CD4-positive, alpha-beta memory T cell (primary cell): ENCODE measurements at regions of chr12 and their contacts with region 1.

Region 1: DNA sequence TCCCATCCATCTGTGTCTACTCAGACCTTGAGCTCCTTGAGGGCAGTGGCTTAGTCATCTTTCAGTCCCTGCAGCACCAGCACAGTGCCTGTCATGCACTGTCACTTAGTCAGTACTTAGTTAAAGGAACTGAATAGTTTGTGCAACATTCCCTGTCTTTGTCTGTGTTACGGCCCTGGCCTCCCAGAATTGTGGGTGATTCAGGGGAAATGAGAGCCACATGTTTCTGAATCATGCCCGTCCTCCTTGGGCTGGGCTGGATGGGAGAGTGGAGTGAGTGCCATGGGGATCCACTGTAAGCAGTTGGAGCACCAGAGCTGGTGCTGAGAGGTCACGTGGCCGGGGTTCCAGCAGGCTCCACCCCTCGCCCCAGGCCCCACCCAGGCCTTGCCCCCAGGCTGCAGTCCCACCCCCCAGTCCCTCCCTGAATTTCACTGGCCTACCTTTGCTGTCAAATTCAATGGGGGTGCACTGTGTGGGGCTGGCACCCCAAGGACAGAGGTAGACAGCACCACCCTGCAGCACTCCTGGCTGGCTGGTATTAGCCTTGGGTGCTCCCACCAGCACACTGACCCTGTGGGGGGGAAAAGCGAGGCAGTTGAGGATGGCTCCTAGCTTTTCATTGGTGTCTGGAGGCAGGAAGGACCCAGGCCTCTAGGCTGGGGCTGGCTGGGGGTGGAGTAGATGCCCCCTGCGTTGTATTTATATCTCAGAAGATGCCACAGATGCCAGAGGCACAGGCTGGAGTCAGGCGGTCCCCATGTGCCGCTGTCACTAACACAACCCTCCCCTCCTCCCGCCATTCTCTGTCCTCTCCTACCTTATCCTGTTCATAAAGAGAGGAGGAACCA is 7.5 kb downstream of the ITGA5 start:
- DNase-seq: peak in 3 of 5 donors; percentile 38 to 66 (median 43)
- H3K4me3 ChIP-seq: peak overlapping the region; percentile 8 to 94
- H3K4me3 Mint-ChIP-seq: peak overlapping the region; percentile 72 to 90 (median 82)
- H3K27ac ChIP-seq: peak overlapping the region; percentile 92
- H3K27ac Mint-ChIP-seq: peak overlapping the region; percentile 90 to 100 (median 97)
- H3K4me1 ChIP-seq: peaks cover 73% of the 10 kb centered on the region
- H3K4me1 Mint-ChIP-seq: peaks cover 40 to 84% (median 71%) of the 10 kb centered on the region in 4 donors
- H3K27me3 ChIP-seq: no peaks in the 10 kb centered on the region
- H3K27me3 Mint-ChIP-seq: no peaks in the 10 kb centered on the region

Region 2: GRCh38 chr12:54259194-54260011 is 152.2 kb before region 1 on chr12:
- CTCF ChIA-PET with region 1: no interaction called
- POLR2A ChIA-PET with region 1: no interaction called
- intact Hi-C with region 1: no loop called
- DNase-seq: peak in 4 of 5 donors; percentile 17 to 53 (median 40)
- H3K4me3 ChIP-seq: no peak overlapping the region
- H3K4me3 Mint-ChIP-seq: peak overlapping the region in 1 of 8 donors; percentile 51
- H3K27ac ChIP-seq: no peak overlapping the region
- H3K27ac Mint-ChIP-seq: peak overlapping the region in 4 of 7 donors; percentile 28 to 57 (median 46)
- H3K4me1 ChIP-seq: peaks cover 22% of the 10 kb centered on the region
- H3K4me1 Mint-ChIP-seq: peaks cover 11 to 26% (median 16%) of the 10 kb centered on the region in 4 donors
- H3K27me3 ChIP-seq: no peaks in the 10 kb centered on the region
- H3K27me3 Mint-ChIP-seq: no peaks in the 10 kb centered on the region

Region 3: GRCh38 chr12:54390668-54391551 is 20.7 kb before region 1 on chr12:
- CTCF ChIA-PET with region 1: interaction called, 379 read pairs
- POLR2A ChIA-PET with region 1: interaction called, 20 read pairs
- intact Hi-C with region 1: no loop called
- DNase-seq: peak; percentile 64 to 77 (median 67)
- H3K4me3 ChIP-seq: peak overlapping the region; percentile 15 to 28
- H3K4me3 Mint-ChIP-seq: peak overlapping the region; percentile 64 to 89 (median 80)
- H3K27ac ChIP-seq: no peak overlapping the region
- H3K27ac Mint-ChIP-seq: peak overlapping the region in 1 of 7 donors; percentile 25
- H3K4me1 ChIP-seq: peaks cover 39% of the 10 kb centered on the region
- H3K4me1 Mint-ChIP-seq: peaks cover 24 to 51% (median 29%) of the 10 kb centered on the region in 4 donors
- H3K27me3 ChIP-seq: no peaks in the 10 kb centered on the region
- H3K27me3 Mint-ChIP-seq: no peaks in the 10 kb centered on the region

Region 4: GRCh38 chr12:54398995-54399793 is 12.4 kb before region 1 on chr12:
- CTCF ChIA-PET with region 1: interaction called, 379 read pairs
- POLR2A ChIA-PET with region 1: interaction called, 213 read pairs
- intact Hi-C with region 1: loop called (anchors 1 kb)
- DNase-seq: peak; percentile 82 to 88 (median 85)
- H3K4me3 ChIP-seq: no peak overlapping the region
- H3K4me3 Mint-ChIP-seq: no peak overlapping the region
- H3K27ac ChIP-seq: no peak overlapping the region
- H3K27ac Mint-ChIP-seq: peak overlapping the region in 5 of 7 donors; percentile 65 to 79 (median 76)
- H3K4me1 ChIP-seq: peaks cover 9% of the 10 kb centered on the region
- H3K4me1 Mint-ChIP-seq: peaks cover 7 to 31% (median 14%) of the 10 kb centered on the region in 4 donors
- H3K27me3 ChIP-seq: no peaks in the 10 kb centered on the region
- H3K27me3 Mint-ChIP-seq: no peaks in the 10 kb centered on the region

Region 5: GRCh38 chr12:54425702-54426101 is 14.1 kb after region 1 on chr12:
- CTCF ChIA-PET with region 1: interaction called, 938 read pairs
- POLR2A ChIA-PET with region 1: interaction called, 213 read pairs
- intact Hi-C with region 1: loop called (anchors 1 kb)
- DNase-seq: no peak
- H3K4me3 ChIP-seq: no peak overlapping the region
- H3K4me3 Mint-ChIP-seq: no peak overlapping the region
- H3K27ac ChIP-seq: no peak overlapping the region
- H3K27ac Mint-ChIP-seq: peak overlapping the region in 1 of 7 donors; percentile 48
- H3K4me1 ChIP-seq: peaks cover 22% of the 10 kb centered on the region
- H3K4me1 Mint-ChIP-seq: peaks cover 11 to 35% (median 23%) of the 10 kb centered on the region in 4 donors
- H3K27me3 ChIP-seq: no peaks in the 10 kb centered on the region
- H3K27me3 Mint-ChIP-seq: peaks cover 0 to 1% of the 10 kb centered on the region in 2 donors

Region 6: GRCh38 chr12:54431911-54432814 is 20.5 kb after region 1 on chr12:
- CTCF ChIA-PET with region 1: interaction called, 938 read pairs
- POLR2A ChIA-PET with region 1: interaction called, 64 read pairs
- intact Hi-C with region 1: loop called (anchors 2 kb)
- DNase-seq: no peak
- H3K4me3 ChIP-seq: no peak overlapping the region
- H3K4me3 Mint-ChIP-seq: peak overlapping the region in 7 of 8 donors; percentile 10 to 75 (median 36)
- H3K27ac ChIP-seq: no peak overlapping the region
- H3K27ac Mint-ChIP-seq: peak overlapping the region in 5 of 7 donors; percentile 28 to 77 (median 68)
- H3K4me1 ChIP-seq: peaks cover 45% of the 10 kb centered on the region
- H3K4me1 Mint-ChIP-seq: peaks cover 21 to 44% (median 37%) of the 10 kb centered on the region in 4 donors
- H3K27me3 ChIP-seq: no peaks in the 10 kb centered on the region
- H3K27me3 Mint-ChIP-seq: no peaks in the 10 kb centered on the region

Region 7: DNA sequence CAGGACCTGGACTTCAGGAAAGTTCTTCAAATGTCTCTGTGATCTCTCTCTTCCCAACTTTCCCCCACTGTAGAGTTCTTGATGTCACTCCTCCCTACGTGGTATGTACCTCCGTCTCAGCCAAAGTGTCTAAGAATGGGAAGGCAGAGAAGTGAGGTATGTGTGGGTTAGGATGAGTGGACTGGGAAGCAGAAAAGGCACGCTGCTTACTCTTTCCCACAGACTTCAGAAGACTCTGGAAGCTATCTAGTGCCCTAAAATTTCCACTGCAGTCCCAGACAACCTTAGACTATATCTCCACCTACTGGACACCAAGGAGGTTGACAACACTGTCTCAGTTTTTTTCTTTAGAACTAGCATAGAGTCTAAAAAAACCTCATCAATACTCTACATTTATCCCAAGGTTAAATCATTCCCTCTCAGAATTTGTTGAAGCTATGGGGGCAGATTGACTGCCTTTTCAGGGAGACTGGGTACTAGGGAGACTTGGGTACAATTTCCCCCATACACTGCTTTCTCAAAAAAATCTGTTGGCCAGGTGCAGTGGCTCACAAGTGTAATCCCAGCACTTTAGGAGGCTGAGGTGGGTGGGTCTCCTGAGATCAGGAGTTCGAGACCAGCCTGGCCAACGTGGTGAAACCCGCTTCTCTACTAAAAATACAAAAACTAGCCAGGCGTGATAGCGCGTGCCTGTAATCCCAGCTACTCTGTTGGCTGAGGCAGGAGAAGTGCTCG is 28.1 kb after region 1 on chr12:
- CTCF ChIA-PET with region 1: interaction called, 938 read pairs
- POLR2A ChIA-PET with region 1: interaction called, 31 read pairs
- intact Hi-C with region 1: loop called (anchors 1 kb)
- DNase-seq: peak in 4 of 5 donors; percentile 57 to 66 (median 64)
- H3K4me3 ChIP-seq: no peak overlapping the region
- H3K4me3 Mint-ChIP-seq: no peak overlapping the region
- H3K27ac ChIP-seq: no peak overlapping the region
- H3K27ac Mint-ChIP-seq: peak overlapping the region in 6 of 7 donors; percentile 2 to 82 (median 42)
- H3K4me1 ChIP-seq: no peaks in the 10 kb centered on the region
- H3K4me1 Mint-ChIP-seq: peaks cover 3 to 6% (median 4%) of the 10 kb centered on the region in 4 donors
- H3K27me3 ChIP-seq: no peaks in the 10 kb centered on the region
- H3K27me3 Mint-ChIP-seq: peaks cover 0 to 2% of the 10 kb centered on the region in 2 donors

Region 8: GRCh38 chr12:54497883-54498282 is 86.3 kb after region 1 on chr12:
- CTCF ChIA-PET with region 1: interaction called, 4 read pairs
- POLR2A ChIA-PET with region 1: interaction called, 19 read pairs
- intact Hi-C with region 1: loop called (anchors 5 kb)
- DNase-seq: no peak
- H3K4me3 ChIP-seq: peak overlapping the region; percentile 74 to 78
- H3K4me3 Mint-ChIP-seq: peak overlapping the region; percentile 94 to 100 (median 99)
- H3K27ac ChIP-seq: peak overlapping the region; percentile 78
- H3K27ac Mint-ChIP-seq: peak overlapping the region; percentile 88 to 99 (median 98)
- H3K4me1 ChIP-seq: peaks cover 40% of the 10 kb centered on the region
- H3K4me1 Mint-ChIP-seq: peaks cover 33 to 56% (median 37%) of the 10 kb centered on the region in 4 donors
- H3K27me3 ChIP-seq: no peaks in the 10 kb centered on the region
- H3K27me3 Mint-ChIP-seq: no peaks in the 10 kb centered on the region

Region 9: GRCh38 chr12:54631988-54632728 is 220.5 kb after region 1 on chr12:
- CTCF ChIA-PET with region 1: no interaction called
- POLR2A ChIA-PET with region 1: no interaction called
- intact Hi-C with region 1: no loop called
- DNase-seq: no peak
- H3K4me3 ChIP-seq: no peak overlapping the region
- H3K4me3 Mint-ChIP-seq: peak overlapping the region in 1 of 8 donors; percentile 20
- H3K27ac ChIP-seq: no peak overlapping the region
- H3K27ac Mint-ChIP-seq: no peak overlapping the region
- H3K4me1 ChIP-seq: no peaks in the 10 kb centered on the region
- H3K4me1 Mint-ChIP-seq: peaks cover 0 to 2% (median 0%) of the 10 kb centered on the region in 4 donors
- H3K27me3 ChIP-seq: peaks cover 4% of the 10 kb centered on the region
- H3K27me3 Mint-ChIP-seq: peaks cover 35 to 48% of the 10 kb centered on the region in 2 donors